ENCODE measurements at regions of chr9 and their contacts with region 1.

Region 1: DNA sequence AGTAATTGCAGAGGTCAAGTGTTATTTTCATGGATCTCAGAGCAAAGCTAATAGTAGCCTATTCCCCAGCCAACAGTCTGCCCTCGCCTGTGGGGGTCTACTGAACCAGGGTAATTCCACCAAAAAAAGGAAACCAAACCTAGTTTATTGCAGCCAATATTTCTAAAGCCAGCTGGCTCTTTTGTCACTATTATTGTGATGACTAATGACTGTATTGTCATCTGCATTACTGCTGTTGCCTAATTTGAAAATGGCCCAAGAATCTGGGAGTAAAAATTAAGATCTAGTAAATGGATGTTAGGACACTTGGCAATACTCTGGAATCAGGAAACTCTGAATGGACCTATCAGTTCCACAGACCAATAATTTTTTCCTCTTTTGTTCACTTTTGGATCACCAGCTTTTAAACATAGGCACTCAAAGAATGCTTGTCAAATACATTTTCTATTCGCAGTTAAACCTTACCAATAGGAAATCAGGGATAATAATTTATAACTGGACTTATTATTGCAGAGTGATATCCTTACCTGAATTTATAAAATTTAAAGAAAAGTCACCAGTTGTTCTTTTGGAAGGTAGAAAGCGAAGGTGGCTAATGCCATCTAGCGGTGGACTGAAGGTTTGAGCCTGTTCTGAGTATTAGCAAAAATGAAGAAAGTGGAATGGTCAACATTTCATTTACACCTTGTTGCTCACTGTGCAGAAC is 69.2 kb downstream of the SYK start:
- DNase-seq: peak; percentile 57
- ATAC-seq: no peak
- H3K4me3 Mint-ChIP-seq: no peak overlapping the region
- H3K27ac Mint-ChIP-seq: no peak overlapping the region
- H3K4me1 Mint-ChIP-seq: no peaks in the 10 kb centered on the region
- H3K27me3 Mint-ChIP-seq: peaks cover 1% of the 10 kb centered on the region

Region 2: GRCh38 chr9:89576404-89576839 is 1294.4 kb before region 1 on chr9:
- CTCF ChIA-PET with region 1: no interaction called
- POLR2A ChIA-PET with region 1: no interaction called
- intact Hi-C with region 1: loop called in 1 of 2 experiments (anchors 2 kb)
- DNase-seq: no peak
- ATAC-seq: no peak
- H3K4me3 Mint-ChIP-seq: no peak overlapping the region
- H3K27ac Mint-ChIP-seq: no peak overlapping the region
- H3K4me1 Mint-ChIP-seq: peaks cover 10% of the 10 kb centered on the region
- H3K27me3 Mint-ChIP-seq: peaks cover 27% of the 10 kb centered on the region

Region 3: GRCh38 chr9:91060503-91061343 is 189.9 kb after region 1 on chr9:
- CTCF ChIA-PET with region 1: no interaction called
- POLR2A ChIA-PET with region 1: no interaction called
- intact Hi-C with region 1: no loop called
- DNase-seq: no peak
- ATAC-seq: peak; percentile 55
- H3K4me3 Mint-ChIP-seq: no peak overlapping the region
- H3K27ac Mint-ChIP-seq: peak overlapping the region; percentile 83
- H3K4me1 Mint-ChIP-seq: peaks cover 48% of the 10 kb centered on the region
- H3K27me3 Mint-ChIP-seq: no peaks in the 10 kb centered on the region